ENCODE measurements at regions of chr6 and their contacts with region 1.

Region 1: DNA sequence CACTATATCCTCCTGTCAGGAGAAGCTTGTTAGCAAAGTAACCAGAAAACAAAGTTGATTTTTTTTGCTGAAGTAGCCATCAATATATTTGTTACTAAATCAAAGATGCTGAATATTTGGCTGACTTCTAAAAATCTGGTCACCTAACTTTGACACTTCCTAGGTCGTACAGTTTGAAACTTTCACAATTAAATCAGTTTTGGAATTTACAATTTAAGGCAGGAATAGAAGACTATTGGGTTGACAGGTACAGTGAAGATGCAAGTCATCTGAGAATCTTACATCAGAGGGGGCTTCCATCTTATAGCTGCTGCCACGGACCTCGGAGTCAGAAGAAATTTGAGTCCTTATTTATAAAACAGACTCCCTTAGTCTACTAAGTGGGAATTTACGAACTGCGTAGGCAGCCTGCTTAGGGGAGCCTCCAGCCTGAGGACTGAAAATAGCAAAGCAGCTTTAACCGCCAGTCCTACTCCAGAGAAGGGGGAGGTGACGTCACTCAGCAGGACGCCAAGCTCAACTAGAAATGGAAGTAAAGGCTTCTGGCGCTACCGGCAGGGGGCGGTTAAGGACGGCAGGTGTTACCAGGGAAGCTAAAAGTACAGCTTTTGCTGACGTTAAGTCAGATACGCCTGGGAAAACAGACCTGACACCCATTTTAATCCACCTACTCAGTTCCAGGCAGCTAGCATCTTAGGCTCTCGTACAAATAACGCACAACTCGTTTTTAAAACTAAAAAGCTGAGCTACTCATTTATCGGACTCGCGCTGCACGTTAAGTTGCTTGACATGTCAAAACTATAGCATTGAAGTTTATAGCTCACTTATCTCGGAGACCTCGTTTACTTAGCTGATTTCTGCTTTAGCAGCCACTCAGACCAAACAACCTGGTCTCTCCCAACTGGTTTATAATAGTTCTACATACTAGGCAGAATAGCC is 61.1 kb upstream of the HFE start:
- DNase-seq: peak; percentile 95
- H3K4me3 ChIP-seq: peak overlapping the region; percentile 71
- H3K27ac ChIP-seq: peak overlapping the region; percentile 99
- H3K4me1 ChIP-seq: peaks cover 80% of the 10 kb centered on the region
- CTCF ChIP-seq: peak; percentile 88

Region 2: DNA sequence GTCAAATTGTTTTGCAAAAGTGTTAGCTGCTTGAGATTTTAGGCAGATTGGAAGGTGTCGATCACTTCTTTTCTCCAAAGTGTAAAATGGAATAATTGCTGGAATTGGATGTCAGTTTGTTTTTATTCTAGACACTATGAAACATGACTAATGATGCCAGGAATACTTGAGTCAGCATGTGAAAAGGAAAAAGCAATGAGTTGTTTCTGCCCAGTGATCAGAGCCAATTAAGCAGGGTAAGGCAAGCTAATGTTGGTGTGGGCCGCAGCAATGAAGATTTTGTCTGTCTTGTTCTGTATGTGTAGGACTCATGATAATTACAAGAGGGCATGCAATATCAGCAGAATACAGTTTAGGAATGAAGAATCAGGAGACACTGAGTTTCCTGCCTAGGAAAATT is 636.7 kb before region 1 on chr6:
- CTCF ChIA-PET with region 1: no interaction called
- POLR2A ChIA-PET with region 1: interaction called, 10 read pairs
- intact Hi-C with region 1: loop called (anchors 5 kb)
- DNase-seq: no peak
- H3K4me3 ChIP-seq: peak overlapping the region; percentile 60
- H3K27ac ChIP-seq: peak overlapping the region; percentile 99
- H3K4me1 ChIP-seq: peaks cover 94% of the 10 kb centered on the region
- CTCF ChIP-seq: no peak

Region 3: GRCh38 chr6:26003102-26003694 is 23.0 kb before region 1 on chr6:
- CTCF ChIA-PET with region 1: no interaction called
- POLR2A ChIA-PET with region 1: interaction called, 15 read pairs
- intact Hi-C with region 1: no loop called
- DNase-seq: peak; percentile 52
- H3K4me3 ChIP-seq: no peak overlapping the region
- H3K27ac ChIP-seq: no peak overlapping the region
- H3K4me1 ChIP-seq: no peaks in the 10 kb centered on the region
- CTCF ChIP-seq: peak; percentile 92

Region 4: GRCh38 chr6:26103770-26104456 is 77.8 kb after region 1 on chr6:
- CTCF ChIA-PET with region 1: no interaction called
- POLR2A ChIA-PET with region 1: interaction called, 24 read pairs
- intact Hi-C with region 1: loop called (anchors 2 kb)
- DNase-seq: peak; percentile 94
- H3K4me3 ChIP-seq: peak overlapping the region; percentile 66
- H3K27ac ChIP-seq: peak overlapping the region; percentile 96
- H3K4me1 ChIP-seq: peaks cover 25% of the 10 kb centered on the region
- CTCF ChIP-seq: peak; percentile 65

Region 5: DNA sequence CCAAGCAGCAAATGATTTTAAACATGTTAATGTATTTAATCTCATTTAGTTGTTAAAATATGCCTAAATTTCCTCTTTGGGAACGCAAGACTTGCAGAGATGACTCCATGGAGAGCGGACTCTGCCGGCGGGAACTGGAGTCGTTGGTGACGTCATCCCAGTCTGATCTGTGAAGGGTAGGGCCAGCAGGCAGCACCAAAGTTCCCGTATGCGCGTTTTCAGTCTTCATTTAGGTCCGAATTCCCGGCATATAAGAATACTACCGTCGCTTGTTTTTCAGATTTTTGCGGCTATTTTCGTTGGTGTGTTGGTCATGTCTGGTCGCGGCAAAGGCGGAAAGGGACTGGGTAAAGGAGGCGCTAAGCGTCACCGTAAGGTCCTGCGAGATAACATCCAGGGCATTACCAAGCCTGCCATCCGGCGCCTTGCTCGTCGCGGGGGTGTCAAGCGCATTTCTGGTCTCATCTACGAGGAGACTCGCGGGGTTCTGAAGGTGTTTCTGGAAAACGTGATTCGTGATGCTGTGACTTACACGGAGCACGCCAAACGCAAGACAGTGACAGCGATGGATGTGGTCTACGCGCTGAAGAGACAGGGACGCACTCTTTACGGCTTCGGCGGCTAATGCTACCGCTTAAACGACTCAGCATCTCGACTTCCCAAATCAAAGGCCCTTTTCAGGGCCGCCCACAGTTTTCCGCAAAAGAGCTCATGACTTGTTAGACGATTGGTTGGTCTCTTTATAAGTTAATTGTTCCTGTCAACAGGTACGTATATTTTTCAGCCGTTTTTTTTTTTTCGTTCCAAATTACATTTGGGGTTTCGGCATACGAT is 178.4 kb after region 1 on chr6:
- CTCF ChIA-PET with region 1: no interaction called
- POLR2A ChIA-PET with region 1: interaction called, 246 read pairs
- intact Hi-C with region 1: loop called (anchors 1 kb)
- DNase-seq: peak; percentile 98
- H3K4me3 ChIP-seq: peak overlapping the region; percentile 79
- H3K27ac ChIP-seq: peak overlapping the region; percentile 93
- H3K4me1 ChIP-seq: peaks cover 63% of the 10 kb centered on the region
- CTCF ChIP-seq: peak; percentile 61

Region 6: DNA sequence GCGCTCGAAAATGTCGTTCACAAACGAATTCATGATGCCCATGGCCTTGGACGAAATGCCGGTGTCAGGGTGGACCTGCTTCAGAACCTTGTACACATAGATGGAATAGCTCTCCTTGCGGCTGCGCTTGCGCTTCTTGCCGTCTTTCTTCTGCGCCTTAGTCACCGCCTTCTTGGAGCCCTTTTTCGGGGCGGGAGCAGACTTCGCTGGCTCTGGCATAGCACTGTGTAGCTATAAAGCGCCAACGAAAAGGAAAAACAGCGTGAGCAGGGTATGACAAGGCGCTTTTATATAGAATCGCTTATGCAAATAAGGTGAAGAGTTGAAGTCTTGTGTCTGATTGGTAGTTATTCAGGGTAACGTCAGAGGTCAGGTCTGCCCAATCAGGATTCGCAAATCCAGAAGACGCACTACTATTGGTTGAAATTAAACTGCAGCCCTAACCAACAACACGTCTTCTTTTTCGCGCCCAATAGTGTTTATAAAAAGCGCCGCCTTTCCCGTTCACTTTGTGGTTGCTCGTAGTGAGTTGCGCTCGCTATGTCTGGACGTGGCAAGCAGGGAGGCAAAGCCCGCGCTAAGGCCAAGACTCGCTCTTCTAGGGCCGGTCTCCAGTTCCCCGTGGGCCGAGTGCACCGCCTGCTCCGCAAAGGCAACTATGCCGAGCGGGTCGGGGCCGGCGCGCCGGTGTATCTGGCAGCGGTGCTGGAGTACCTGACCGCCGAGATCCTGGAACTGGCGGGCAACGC is 1106.5 kb after region 1 on chr6:
- CTCF ChIA-PET with region 1: no interaction called
- POLR2A ChIA-PET with region 1: interaction called, 11 read pairs
- intact Hi-C with region 1: loop called (anchors 1 kb)
- DNase-seq: peak; percentile 98
- H3K4me3 ChIP-seq: peak overlapping the region; percentile 79
- H3K27ac ChIP-seq: peak overlapping the region; percentile 99
- H3K4me1 ChIP-seq: peaks cover 74% of the 10 kb centered on the region
- CTCF ChIP-seq: no peak

Region 7: GRCh38 chr6:27838058-27838944 is 1812.1 kb after region 1 on chr6:
- CTCF ChIA-PET with region 1: interaction called, 3 read pairs
- POLR2A ChIA-PET with region 1: interaction called, 32 read pairs
- intact Hi-C with region 1: no loop called
- DNase-seq: peak; percentile 99
- H3K4me3 ChIP-seq: peak overlapping the region; percentile 87
- H3K27ac ChIP-seq: peak overlapping the region; percentile 97
- H3K4me1 ChIP-seq: peaks cover 37% of the 10 kb centered on the region
- CTCF ChIP-seq: no peak

Measured in OCI-LY7 (cell line).